ENCODE measurements at regions of chr17 and their contacts with region 1.

Region 1: GRCh38 chr17:82457997-82458864 is at the start of gene NARF:
- DNase-seq: peak; percentile 99
- H3K4me3 Mint-ChIP-seq: peak within 1 kb of the TSS; percentile 93
- H3K27ac Mint-ChIP-seq: peak within 1 kb of the TSS; percentile 98
- H3K4me1 Mint-ChIP-seq: peaks cover 37% of the 10 kb centered on the region
- H3K27me3 Mint-ChIP-seq: no peaks in the 10 kb centered on the region
- total RNA-seq, gene NARF: 99.7 and 101 TPM in 2 replicates

Region 2: GRCh38 chr17:82230627-82231311 is 227.5 kb before region 1 on chr17:
- intact Hi-C with region 1: loop called (anchors 10 kb)
- DNase-seq: peak; percentile 92
- H3K4me3 Mint-ChIP-seq: peak overlapping the region; percentile 96
- H3K27ac Mint-ChIP-seq: no peak overlapping the region
- H3K4me1 Mint-ChIP-seq: peaks cover 8% of the 10 kb centered on the region
- H3K27me3 Mint-ChIP-seq: no peaks in the 10 kb centered on the region

Region 3: GRCh38 chr17:82292251-82293154 is 165.7 kb before region 1 on chr17:
- intact Hi-C with region 1: loop called (anchors 2 kb)
- DNase-seq: peak; percentile 98
- H3K4me3 Mint-ChIP-seq: peak overlapping the region; percentile 87
- H3K27ac Mint-ChIP-seq: peak overlapping the region; percentile 93
- H3K4me1 Mint-ChIP-seq: peaks cover 43% of the 10 kb centered on the region
- H3K27me3 Mint-ChIP-seq: peaks cover 2% of the 10 kb centered on the region

Region 4: DNA sequence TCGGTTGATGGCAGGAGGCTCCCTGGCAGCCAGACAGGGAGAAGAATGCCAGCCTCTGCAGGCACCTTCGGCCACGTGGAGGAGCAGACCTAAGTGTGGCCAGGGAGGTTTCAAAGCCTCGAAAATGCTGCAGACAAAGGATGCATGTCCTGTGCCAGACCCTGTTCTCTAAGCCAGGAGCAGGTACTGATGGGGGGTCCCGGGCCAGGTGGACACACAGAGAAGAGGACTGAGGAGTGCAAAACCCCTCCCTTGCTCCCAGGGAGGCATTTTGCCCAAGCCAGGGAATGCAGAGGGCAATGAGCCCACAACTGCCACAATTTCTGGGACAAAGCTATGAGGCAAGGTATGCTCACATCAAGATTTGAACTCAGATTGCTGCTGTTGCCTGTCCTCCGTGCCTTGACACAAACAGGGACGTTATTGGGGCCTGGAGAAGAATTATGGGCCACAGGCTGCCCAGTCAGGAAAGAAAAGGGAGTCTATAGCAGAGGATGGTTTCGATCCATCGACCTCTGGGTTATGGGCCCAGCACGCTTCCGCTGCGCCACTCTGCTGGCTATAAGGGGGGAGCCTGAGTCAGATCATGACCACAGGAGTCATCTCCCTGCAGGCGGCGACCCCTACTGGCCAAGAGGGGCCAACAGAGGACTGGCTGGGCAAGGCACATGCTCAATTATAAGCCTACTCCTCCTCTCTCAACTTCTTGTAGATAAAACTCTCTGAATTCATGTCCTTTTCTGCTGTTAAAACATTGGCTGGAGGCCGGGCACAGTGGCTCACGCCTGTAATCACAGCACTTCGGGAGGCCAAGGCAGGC is 36.2 kb after region 1 on chr17:
- intact Hi-C with region 1: loop called (anchors 2 kb)
- DNase-seq: peak; percentile 96
- H3K4me3 Mint-ChIP-seq: peak overlapping the region; percentile 39
- H3K27ac Mint-ChIP-seq: peak overlapping the region; percentile 93
- H3K4me1 Mint-ChIP-seq: peaks cover 20% of the 10 kb centered on the region
- H3K27me3 Mint-ChIP-seq: no peaks in the 10 kb centered on the region

Region 5: DNA sequence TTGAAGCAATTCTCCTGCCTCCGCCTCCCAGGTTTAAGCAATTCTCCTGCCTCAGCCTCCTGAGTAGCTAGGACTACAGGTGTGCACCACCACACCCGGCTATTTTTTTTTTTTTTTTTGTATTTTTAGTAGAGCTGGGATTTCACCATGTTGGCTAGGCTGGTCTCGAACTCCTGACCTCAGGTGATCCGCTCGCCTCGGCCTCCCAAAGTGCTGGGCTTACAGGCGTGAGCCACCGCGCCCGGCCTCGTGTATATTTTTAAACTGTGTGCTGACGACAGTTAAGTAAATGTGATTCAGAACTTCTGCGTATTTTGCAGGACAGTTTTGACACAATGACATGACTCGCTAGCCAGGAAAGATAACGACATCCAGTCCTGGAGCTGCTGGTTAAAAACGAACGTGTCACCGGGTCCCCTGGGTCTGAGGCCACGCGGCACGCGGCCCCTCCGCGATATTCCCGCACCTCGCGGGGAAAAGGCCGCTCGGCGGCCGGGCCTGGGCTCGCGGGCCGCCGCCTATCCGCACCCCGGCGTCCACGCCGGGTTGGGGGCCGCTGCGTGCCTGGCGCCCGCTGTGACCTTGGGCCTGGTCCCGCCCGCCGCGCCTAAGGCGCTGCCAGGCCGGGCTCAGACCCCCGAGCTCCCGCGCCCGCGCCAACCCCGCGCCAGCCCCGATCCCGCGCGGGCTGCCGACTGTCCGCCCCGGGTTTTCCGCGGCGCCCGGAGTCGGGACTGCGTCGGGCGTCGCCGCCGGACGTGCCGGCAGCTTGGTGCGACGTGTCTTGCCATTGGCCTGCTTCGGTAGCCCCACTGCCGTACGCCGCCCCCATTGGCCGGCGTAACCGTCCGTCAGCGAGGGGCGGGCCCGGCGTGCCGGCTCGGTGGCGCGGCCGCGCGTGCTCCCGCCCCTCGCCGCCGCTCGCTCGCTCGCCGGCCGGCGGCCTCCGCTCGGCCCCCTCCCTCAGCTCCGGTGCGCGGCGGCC is 60.9 kb after region 1 on chr17 and contains the start of gene FOXK2:
- intact Hi-C with region 1: loop called (anchors 2 kb)
- DNase-seq: peak; percentile 99
- H3K4me3 Mint-ChIP-seq: peak within 1 kb of the TSS; percentile 86
- H3K27ac Mint-ChIP-seq: peak within 1 kb of the TSS; percentile 86
- H3K4me1 Mint-ChIP-seq: peaks cover 20% of the 10 kb centered on the region
- H3K27me3 Mint-ChIP-seq: no peaks in the 10 kb centered on the region
- total RNA-seq, gene FOXK2: 92.6 and 97.4 TPM in 2 replicates

Region 6: GRCh38 chr17:82751571-82752370 is 293.5 kb after region 1 on chr17 and contains the start of gene TBCD:
- intact Hi-C with region 1: loop called (anchors 10 kb)
- DNase-seq: peak; percentile 96
- H3K4me3 Mint-ChIP-seq: peak within 1 kb of the TSS; percentile 93
- H3K27ac Mint-ChIP-seq: peak within 1 kb of the TSS; percentile 87
- H3K4me1 Mint-ChIP-seq: peaks cover 24% of the 10 kb centered on the region
- H3K27me3 Mint-ChIP-seq: no peaks in the 10 kb centered on the region
- total RNA-seq, gene TBCD: 117 and 122 TPM in 2 replicates